Activated CD4-positive, alpha-beta T cell treated with anti-CD3 and anti-CD28 coated beads, Interleukin-2, amount 10 ng/mL, durations not matched to agents 24 days and 14 days (primary cell): ENCODE measurements at regions of chr4 and their contacts with region 1.

Region 1: GRCh38 chr4:185471235-185472102 is at the start of gene CCDC110:
- DNase-seq: peak; percentile 95
- H3K4me3 Mint-ChIP-seq: peak within 1 kb of the TSS; percentile 83
- H3K27ac Mint-ChIP-seq: no peak within 1 kb of the TSS
- H3K4me1 Mint-ChIP-seq: peaks cover 8% of the 10 kb centered on the region
- H3K27me3 Mint-ChIP-seq: peaks cover 49% of the 10 kb centered on the region
- total RNA-seq, gene CCDC110: not detected in 2 replicates

Region 2: GRCh38 chr4:185209031-185209851 is 262.2 kb before region 1 on chr4 and contains the start of gene SNX25:
- intact Hi-C with region 1: loop called (anchors 1 kb)
- DNase-seq: peak; percentile 97
- H3K4me3 Mint-ChIP-seq: peak within 1 kb of the TSS; percentile 94
- H3K27ac Mint-ChIP-seq: peak within 1 kb of the TSS; percentile 83
- H3K4me1 Mint-ChIP-seq: peaks cover 48% of the 10 kb centered on the region
- H3K27me3 Mint-ChIP-seq: peaks cover 3% of the 10 kb centered on the region
- total RNA-seq, gene SNX25: 27.0 and 27.3 TPM in 2 replicates

Region 3: DNA sequence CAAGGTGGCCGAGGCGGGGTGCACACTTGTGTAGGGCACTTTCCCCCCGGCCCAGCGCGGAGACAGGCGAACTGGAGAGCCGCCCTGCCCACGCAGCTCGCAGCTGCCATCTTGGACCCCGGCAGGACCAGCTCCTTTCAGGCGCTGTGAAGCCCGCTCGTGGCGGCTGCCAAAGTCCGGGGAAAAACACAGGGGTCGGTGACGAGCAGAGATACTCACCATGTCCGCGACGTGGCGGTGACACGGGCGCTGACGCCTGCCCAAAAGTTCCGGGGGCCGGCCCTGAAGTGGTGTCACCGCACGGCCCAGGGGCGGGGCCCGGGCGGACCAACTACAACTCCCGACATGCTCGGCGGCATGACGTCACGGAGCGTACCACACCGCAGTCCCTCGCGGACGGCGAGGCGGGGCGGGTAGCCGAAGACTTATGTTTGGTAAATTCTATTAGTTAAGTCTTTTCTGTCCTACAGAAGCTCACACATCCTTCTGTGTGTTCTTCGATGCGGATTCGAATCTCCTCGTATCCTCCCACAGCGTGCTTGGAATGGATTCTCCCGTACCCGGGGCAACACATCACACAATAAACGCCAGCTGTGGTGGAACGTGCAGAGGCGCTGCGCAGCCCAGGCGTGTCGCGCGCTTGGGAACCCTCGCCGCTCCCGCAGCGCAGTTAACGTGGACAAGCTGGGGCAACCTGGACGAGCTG is 45.7 kb before region 1 on chr4 and contains the start of gene UFSP2:
- intact Hi-C with region 1: loop called (anchors 1 kb)
- DNase-seq: peak; percentile 97
- H3K4me3 Mint-ChIP-seq: peak within 1 kb of the TSS; percentile 87
- H3K27ac Mint-ChIP-seq: peak within 1 kb of the TSS; percentile 98
- H3K4me1 Mint-ChIP-seq: peaks cover 24% of the 10 kb centered on the region
- H3K27me3 Mint-ChIP-seq: peaks cover 14% of the 10 kb centered on the region
- total RNA-seq, gene UFSP2: 24.8 and 25.7 TPM in 2 replicates

Region 4: DNA sequence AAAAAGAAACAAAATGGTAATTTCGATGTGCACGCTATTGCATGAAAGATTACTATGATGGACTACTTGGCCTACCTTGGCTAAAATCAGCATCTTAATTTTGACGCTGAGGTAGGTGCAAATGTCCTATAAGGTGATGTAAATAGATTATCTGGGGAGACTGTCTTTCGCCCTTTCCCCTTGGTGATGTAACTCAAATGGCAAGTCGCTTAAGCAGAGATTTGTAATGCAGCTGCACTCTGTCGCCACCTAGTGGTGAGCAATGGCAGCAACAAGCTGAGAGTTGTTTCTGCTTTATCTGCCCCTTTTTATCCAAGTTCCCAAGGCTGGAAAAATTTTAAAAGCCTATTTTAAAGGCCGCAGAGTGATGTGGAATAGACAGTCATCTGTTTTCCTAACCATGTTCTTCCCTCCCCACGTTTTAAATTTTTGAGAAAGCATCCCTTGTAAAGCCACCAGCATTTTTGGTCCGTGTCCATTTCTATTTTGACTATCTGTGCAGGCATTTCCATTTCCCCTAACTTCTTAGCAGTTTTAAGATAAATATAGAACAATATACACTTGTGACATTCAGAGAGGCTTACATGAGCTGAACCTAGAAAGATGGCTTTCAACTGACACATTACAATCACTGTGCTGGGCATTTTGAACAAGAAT is 126.2 kb after region 1 on chr4:
- intact Hi-C with region 1: loop called (anchors 1 kb)
- DNase-seq: peak; percentile 88
- H3K4me3 Mint-ChIP-seq: no peak overlapping the region
- H3K27ac Mint-ChIP-seq: no peak overlapping the region
- H3K4me1 Mint-ChIP-seq: no peaks in the 10 kb centered on the region
- H3K27me3 Mint-ChIP-seq: peaks cover 7% of the 10 kb centered on the region

Region 5: GRCh38 chr4:186037692-186038658 is 566.5 kb after region 1 on chr4:
- intact Hi-C with region 1: loop called (anchors 5 kb)
- DNase-seq: peak; percentile 78
- H3K4me3 Mint-ChIP-seq: no peak overlapping the region
- H3K27ac Mint-ChIP-seq: no peak overlapping the region
- H3K4me1 Mint-ChIP-seq: no peaks in the 10 kb centered on the region
- H3K27me3 Mint-ChIP-seq: peaks cover 9% of the 10 kb centered on the region

Region 6: DNA sequence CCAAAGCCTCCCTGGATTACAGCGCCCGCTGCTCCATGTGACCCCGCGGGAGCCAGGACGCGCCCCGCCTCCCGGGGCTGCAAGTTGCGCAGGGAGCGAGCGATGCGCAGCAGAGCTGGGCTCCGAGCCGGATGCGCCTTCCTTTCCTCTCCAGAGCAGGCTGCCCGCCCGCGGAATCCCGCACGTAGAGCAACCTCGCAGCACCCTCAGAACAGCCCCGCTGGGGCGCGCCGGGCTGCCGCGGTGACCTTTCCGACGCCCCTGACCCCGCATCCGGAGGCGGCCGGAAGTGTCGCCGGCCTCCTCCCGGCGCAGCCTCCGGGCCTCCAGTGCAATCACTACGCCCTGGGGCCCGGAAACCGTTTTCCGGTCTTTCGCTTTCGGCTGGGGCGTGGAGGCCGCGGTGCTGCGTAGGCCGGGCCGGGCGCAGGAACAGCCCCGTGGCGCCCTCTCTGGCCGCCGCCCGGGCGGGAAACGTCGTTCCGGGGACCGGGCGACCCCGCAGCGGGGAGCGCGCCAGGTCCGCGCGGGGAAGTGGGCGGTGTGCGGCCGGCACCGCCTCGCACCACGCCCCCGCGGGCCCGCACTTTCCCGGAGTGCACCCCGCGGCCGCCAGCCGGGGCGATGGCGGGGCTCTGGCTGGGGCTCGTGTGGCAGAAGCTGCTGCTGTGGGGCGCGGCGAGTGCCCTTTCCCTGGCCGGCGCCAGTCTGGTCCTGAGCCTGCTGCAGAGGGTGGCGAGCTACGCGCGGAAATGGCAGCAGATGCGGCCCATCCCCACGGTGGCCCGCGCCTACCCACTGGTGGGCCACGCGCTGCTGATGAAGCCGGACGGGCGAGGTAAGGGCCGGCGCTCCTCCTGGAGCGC is 720.0 kb after region 1 on chr4 and contains the start of gene CYP4V2:
- intact Hi-C with region 1: loop called (anchors 5 kb)
- DNase-seq: peak; percentile 98
- H3K4me3 Mint-ChIP-seq: peak within 1 kb of the TSS; percentile 97
- H3K27ac Mint-ChIP-seq: peak within 1 kb of the TSS; percentile 94
- H3K4me1 Mint-ChIP-seq: peaks cover 23% of the 10 kb centered on the region
- H3K27me3 Mint-ChIP-seq: no peaks in the 10 kb centered on the region
- total RNA-seq, gene CYP4V2: 8.7 and 9.7 TPM in 2 replicates